ENCODE measurements at regions of chr3 and their contacts with region 1.

Region 1: DNA sequence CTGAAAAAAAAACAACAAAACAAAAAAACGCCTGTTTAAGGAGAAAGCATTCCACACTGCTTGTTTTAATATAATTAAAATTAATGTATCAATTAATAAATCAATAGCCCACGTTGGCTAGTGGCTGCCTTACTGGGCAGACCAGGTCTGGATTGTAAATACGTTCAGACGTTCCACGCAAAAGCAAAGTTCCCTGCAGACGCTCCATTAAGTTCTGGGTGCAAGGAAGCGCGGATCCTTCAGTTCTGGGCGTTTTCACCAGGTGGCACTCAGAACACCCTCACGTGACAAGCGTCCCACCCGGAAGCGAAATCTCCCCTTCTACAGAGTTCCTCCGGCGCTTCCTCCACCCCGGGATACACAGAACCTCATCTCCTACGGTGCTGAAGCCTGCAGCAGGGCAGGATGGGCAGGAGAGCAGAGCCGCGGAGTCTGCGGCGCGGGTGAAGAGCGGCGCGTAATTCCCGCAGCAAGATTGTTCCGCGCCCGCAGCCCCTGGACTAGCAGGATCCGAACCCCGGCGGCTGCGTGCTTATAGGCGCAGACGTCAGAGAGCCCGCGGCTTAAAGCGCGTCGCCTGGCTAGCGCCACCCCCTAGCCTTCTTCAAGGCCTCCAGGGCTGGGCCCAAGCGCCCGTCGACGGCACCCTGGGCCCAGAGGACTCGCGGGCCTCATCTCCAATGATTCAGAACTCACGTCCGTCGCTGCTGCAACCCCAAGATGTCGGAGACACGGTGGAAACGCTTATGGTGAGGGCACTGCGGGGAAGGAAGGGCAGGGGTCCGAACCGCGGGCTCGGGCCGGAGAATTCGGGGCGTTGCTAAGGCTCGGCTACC is at the start of gene SLC25A38:
- H3K4me3 Mint-ChIP-seq: peak within 1 kb of the TSS; percentile 93
- H3K27ac Mint-ChIP-seq: peak within 1 kb of the TSS; percentile 94
- H3K4me1 Mint-ChIP-seq: peaks cover 18% of the 10 kb centered on the region
- H3K27me3 Mint-ChIP-seq: no peaks in the 10 kb centered on the region

Region 2: GRCh38 chr3:38136777-38137614 is 1246.3 kb before region 1 on chr3 and contains the start of gene ACAA1:
- intact Hi-C with region 1: loop called (anchors 5 kb)
- H3K4me3 Mint-ChIP-seq: peak within 1 kb of the TSS; percentile 96
- H3K27ac Mint-ChIP-seq: peak within 1 kb of the TSS; percentile 98
- H3K4me1 Mint-ChIP-seq: peaks cover 82% of the 10 kb centered on the region
- H3K27me3 Mint-ChIP-seq: no peaks in the 10 kb centered on the region

Region 3: DNA sequence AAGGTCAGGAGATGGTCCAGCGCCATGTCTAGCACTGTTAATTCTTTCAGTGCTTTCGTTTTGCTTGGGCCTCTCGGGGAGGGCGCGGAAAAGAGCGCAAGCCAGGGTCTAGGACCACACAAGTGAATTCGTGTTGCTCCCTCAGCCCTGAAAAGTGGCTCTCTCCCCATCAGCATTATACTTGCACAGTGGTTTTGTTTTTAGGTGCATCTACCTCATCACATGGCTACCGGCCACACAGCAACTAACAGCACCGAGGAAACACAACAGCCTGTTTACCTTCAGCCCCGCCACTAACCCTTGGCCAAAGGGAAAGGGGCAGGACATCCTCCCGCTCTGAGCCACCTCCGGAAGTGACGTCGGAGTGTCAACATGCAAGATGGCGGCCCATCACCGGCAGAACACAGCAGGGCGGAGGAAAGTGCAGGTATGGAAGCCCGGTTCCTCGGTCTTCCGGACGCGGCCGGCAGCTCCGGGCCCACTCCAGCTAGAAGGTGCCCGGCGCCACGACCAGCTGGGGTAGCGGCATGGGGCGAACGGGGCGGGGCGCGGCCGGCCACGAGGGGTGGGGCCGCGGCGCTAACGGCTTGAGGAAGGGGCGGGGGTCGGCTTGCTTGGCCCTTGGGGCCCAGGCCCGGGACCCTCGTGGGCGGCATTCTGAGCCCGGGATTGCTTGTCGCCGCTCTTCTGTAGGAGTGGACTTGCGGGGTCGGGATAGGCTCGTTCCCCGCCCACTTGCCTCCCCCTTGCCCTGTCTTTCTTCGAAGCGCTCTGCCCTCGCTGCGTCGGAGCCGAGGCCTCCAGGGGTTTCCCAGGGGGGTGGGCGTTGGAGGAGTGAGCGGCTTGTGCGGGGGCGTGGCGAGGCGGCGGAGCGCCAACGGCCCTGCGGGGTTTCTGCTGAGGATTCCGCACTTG is 331.4 kb before region 1 on chr3 and contains the starts of genes SCN11A and WDR48:
- intact Hi-C with region 1: loop called (anchors 5 kb)
- H3K4me3 Mint-ChIP-seq: peak within 1 kb of the TSS; percentile 89
- H3K27ac Mint-ChIP-seq: peak within 1 kb of the TSS; percentile 92
- H3K4me1 Mint-ChIP-seq: peaks cover 38% of the 10 kb centered on the region
- H3K27me3 Mint-ChIP-seq: no peaks in the 10 kb centered on the region

Region 4: DNA sequence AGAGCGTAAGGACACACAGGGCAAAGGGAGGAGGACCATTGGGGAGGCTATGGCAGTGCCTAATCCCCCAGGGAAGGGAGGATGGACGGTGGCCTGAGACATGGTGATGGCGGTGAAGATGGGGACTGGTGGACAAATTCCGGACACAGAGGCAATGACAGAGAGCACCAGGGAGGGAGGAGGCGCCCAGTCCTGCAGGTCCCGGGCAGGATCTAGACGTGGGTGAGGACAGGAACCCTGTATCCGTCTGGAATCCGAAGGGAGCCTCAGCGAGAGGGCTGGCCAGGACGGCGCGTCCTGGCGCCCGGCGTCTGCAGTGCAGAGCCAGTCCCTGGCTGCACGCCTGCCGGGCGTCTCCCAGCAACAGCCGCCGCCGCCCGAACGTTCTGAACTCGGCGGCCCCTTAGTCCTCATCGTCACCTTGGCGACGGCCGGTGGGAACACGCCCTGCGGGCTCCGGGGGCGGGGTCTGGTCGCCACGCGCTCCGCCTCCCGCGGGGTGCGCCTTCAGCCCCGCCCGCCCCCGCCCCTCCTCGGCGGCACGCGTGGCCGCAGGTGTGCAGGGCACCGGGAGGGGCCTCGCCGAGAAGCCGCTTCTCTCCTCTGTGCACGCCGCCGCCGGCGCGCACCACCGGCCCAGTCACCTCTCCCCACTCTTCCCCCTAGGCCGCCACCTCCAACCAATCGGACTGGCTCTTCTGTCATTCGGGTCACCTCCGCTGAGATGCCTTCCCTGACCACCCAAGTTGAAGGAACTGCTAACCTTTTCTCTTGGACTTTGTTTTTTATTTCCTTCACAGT is 202.5 kb before region 1 on chr3:
- intact Hi-C with region 1: loop called (anchors 10 kb)
- H3K4me3 Mint-ChIP-seq: peak overlapping the region; percentile 72
- H3K27ac Mint-ChIP-seq: peak overlapping the region; percentile 72
- H3K4me1 Mint-ChIP-seq: peaks cover 53% of the 10 kb centered on the region
- H3K27me3 Mint-ChIP-seq: peaks cover 21% of the 10 kb centered on the region

Region 5: DNA sequence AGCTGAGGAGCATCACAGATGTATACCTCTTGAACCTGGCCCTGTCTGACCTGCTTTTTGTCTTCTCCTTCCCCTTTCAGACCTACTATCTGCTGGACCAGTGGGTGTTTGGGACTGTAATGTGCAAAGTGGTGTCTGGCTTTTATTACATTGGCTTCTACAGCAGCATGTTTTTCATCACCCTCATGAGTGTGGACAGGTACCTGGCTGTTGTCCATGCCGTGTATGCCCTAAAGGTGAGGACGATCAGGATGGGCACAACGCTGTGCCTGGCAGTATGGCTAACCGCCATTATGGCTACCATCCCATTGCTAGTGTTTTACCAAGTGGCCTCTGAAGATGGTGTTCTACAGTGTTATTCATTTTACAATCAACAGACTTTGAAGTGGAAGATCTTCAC is 50.7 kb before region 1 on chr3:
- intact Hi-C with region 1: no loop called
- H3K4me3 Mint-ChIP-seq: no peak overlapping the region
- H3K27ac Mint-ChIP-seq: no peak overlapping the region
- H3K4me1 Mint-ChIP-seq: no peaks in the 10 kb centered on the region
- H3K27me3 Mint-ChIP-seq: no peaks in the 10 kb centered on the region

Region 6: GRCh38 chr3:39406368-39407258 is 23.4 kb after region 1 on chr3 and contains the start of gene RPSA:
- intact Hi-C with region 1: loop called (anchors 1 kb)
- H3K4me3 Mint-ChIP-seq: peak within 1 kb of the TSS; percentile 90
- H3K27ac Mint-ChIP-seq: peak within 1 kb of the TSS; percentile 90
- H3K4me1 Mint-ChIP-seq: peaks cover 28% of the 10 kb centered on the region
- H3K27me3 Mint-ChIP-seq: no peaks in the 10 kb centered on the region

Region 7: DNA sequence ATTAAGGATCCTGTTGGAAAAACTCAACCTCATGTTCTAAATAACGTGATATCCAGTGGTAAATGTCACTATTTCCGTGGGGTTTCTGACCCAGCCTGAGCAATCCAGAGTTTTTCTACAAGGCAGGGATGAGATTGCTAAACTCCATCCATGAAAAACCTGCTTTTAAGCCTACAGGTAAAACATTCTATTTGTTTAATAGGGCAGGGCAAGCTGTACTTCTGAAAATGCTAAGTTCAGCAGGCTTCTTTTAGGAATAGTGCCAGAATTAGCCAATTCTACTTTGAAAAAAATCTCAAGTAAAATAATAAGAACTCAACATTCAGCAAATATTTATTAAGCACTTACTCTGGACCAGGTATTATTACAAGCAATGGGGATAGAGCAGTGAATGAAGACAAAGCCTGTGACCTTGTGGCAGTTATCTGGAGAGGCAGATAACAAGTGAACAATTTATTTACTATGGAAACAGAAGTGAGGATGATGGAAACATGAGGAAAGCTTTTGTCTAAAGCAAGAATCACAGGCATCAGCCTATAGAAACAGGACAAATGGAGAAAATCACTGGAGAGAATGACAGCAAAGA is 36.6 kb after region 1 on chr3:
- intact Hi-C with region 1: no loop called
- H3K4me3 Mint-ChIP-seq: no peak overlapping the region
- H3K27ac Mint-ChIP-seq: no peak overlapping the region
- H3K4me1 Mint-ChIP-seq: peaks cover 8% of the 10 kb centered on the region
- H3K27me3 Mint-ChIP-seq: peaks cover 17% of the 10 kb centered on the region

Region 8: GRCh38 chr3:39434574-39434973 is 51.3 kb after region 1 on chr3:
- intact Hi-C with region 1: no loop called
- H3K4me3 Mint-ChIP-seq: no peak overlapping the region
- H3K27ac Mint-ChIP-seq: no peak overlapping the region
- H3K4me1 Mint-ChIP-seq: no peaks in the 10 kb centered on the region
- H3K27me3 Mint-ChIP-seq: peaks cover 3% of the 10 kb centered on the region

Measured in dendritic cell treated with granulocyte-macrophage colony-stimulating factor and Interleukin-4, amounts not matched to agents 40 ng/mL and 50 ng/mL, for 4 days (primary cell).